ENCODE measurements at regions of chr19 and their contacts with region 1.

Region 1: DNA sequence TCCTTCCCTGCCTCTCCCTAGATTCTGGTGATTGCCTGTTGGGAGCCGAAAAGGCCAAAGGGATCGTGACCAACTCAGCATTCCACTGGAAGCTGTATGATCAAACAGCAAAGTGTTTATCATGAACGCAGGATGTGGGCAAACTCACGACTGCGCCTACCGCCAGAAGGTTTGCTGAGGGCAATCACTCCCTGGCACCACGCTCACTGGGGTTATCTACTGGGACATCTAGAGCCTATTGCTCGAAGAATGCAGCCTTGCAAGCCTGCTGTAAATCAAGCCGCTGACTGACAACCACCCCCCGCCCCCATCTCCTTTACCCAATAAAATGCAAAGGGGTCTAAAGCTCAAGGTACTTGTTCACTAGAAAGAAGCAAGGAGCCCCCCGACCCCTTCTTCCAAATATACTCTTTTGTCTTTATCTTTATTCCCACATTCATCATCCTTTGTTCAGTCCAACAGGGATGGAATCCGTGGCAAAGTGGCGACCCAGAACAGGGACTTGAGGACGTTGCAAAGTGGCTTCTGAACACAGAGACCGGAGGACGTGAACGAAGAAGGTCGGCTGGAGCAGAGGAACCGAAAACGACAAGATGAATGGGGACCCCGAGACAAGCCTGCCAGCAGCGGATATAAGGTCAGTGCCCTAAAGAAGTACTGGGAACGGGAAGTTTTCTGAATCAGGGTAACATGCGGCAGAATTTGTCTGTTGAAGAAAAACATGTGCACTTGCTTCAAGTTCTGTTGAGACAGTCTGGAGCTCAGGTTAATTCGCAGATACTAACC is 16.9 kb downstream of the CLEC4M start:
- DNase-seq: no peak

Region 2: DNA sequence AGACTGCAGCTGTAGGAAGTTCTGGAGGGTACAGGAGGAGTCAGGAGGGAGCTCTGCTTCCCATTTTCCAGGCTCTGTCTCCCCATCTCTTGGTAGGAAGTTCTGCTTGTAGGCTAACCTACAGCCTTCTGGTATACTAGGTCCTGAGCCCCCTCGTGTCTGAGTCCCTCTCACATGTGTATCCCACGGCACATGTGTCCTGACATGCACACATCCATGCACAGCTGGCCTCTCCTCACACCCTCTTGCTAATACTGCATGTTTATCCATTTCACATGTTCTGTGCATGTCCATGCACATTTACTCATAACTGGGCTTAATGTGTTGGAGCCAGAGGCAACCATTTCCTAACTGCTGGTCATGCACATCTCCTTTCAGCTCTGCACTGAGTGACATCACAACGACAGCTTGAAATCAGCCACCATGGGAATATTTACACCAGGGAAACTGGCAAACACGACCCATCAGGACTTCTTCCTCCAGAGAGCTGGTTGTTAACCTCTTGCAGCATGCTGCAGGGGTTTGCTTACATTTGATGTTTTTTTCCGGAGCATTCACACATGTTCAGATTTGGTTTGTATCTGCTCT is 35.6 kb before region 1 on chr19:
- intact Hi-C with region 1: loop called in 1 of 2 experiments (anchors 1 kb)
- DNase-seq: peak; percentile 64